ENCODE measurements at regions of chr7 and their contacts with region 1.

Region 1: GRCh38 chr7:27684491-27684890 is 21.8 kb upstream of the HIBADH start:
- DNase-seq: no peak
- ATAC-seq: no peak
- H3K4me3 ChIP-seq: no peak overlapping the region
- H3K4me3 Mint-ChIP-seq: no peak overlapping the region
- H3K27ac ChIP-seq: no peak overlapping the region
- H3K27ac Mint-ChIP-seq: no peak overlapping the region
- H3K4me1 ChIP-seq: no peaks in the 10 kb centered on the region
- H3K4me1 Mint-ChIP-seq: no peaks in the 10 kb centered on the region
- H3K27me3 ChIP-seq: no peaks in the 10 kb centered on the region
- H3K27me3 Mint-ChIP-seq: peaks cover 16% of the 10 kb centered on the region
- CTCF ChIP-seq: no peak

Region 2: GRCh38 chr7:27367179-27367932 is 317.1 kb before region 1 on chr7:
- CTCF ChIA-PET with region 1: no interaction called
- POLR2A ChIA-PET with region 1: no interaction called
- intact Hi-C with region 1: no loop called
- DNase-seq: no peak
- ATAC-seq: no peak
- H3K4me3 ChIP-seq: no peak overlapping the region
- H3K4me3 Mint-ChIP-seq: no peak overlapping the region
- H3K27ac ChIP-seq: no peak overlapping the region
- H3K27ac Mint-ChIP-seq: no peak overlapping the region
- H3K4me1 ChIP-seq: no peaks in the 10 kb centered on the region
- H3K4me1 Mint-ChIP-seq: no peaks in the 10 kb centered on the region
- H3K27me3 ChIP-seq: peaks cover 0 to 2% of the 10 kb centered on the region in 2 experiments
- H3K27me3 Mint-ChIP-seq: peaks cover 22% of the 10 kb centered on the region
- CTCF ChIP-seq: no peak

Region 3: DNA sequence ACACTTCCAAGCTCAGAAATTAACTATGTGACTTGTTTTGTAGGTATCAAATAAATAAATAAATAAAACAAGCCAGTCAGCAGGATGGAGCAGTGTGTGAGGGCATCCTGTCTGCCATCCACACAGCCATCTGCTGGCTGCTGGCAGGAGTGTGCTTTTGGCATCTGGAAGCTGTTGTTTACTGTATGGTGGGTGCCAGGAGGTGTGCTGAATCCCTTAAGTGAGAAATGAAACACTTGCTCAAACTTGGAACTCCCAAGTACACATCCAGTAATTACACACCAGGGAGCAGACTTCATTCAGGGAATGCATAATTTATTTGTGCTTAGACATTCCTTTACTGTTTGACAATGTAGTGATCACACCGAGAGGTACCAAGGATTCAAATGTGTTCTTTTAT is 38.6 kb after region 1 on chr7:
- CTCF ChIA-PET with region 1: interaction called, 3 read pairs
- POLR2A ChIA-PET with region 1: no interaction called
- intact Hi-C with region 1: loop called in 1 of 2 experiments (anchors 5 kb)
- DNase-seq: peak in 2 of 14 experiments; percentile 2 to 5
- ATAC-seq: no peak
- H3K4me3 ChIP-seq: no peak overlapping the region
- H3K4me3 Mint-ChIP-seq: no peak overlapping the region
- H3K27ac ChIP-seq: no peak overlapping the region
- H3K27ac Mint-ChIP-seq: no peak overlapping the region
- H3K4me1 ChIP-seq: no peaks in the 10 kb centered on the region
- H3K4me1 Mint-ChIP-seq: no peaks in the 10 kb centered on the region
- H3K27me3 ChIP-seq: no peaks in the 10 kb centered on the region
- H3K27me3 Mint-ChIP-seq: no peaks in the 10 kb centered on the region
- CTCF ChIP-seq: no peak

Region 4: GRCh38 chr7:27933671-27934565 is 249.4 kb after region 1 on chr7:
- CTCF ChIA-PET with region 1: no interaction called
- POLR2A ChIA-PET with region 1: no interaction called
- intact Hi-C with region 1: no loop called
- DNase-seq: peak in 1 of 14 experiments; percentile 5
- ATAC-seq: no peak
- H3K4me3 ChIP-seq: no peak overlapping the region
- H3K4me3 Mint-ChIP-seq: no peak overlapping the region
- H3K27ac ChIP-seq: no peak overlapping the region
- H3K27ac Mint-ChIP-seq: no peak overlapping the region
- H3K4me1 ChIP-seq: no peaks in the 10 kb centered on the region
- H3K4me1 Mint-ChIP-seq: peaks cover 4% of the 10 kb centered on the region
- H3K27me3 ChIP-seq: no peaks in the 10 kb centered on the region
- H3K27me3 Mint-ChIP-seq: no peaks in the 10 kb centered on the region
- CTCF ChIP-seq: peak; percentile 27